ENCODE measurements at regions of chr6 and their contacts with region 1.

Region 1: DNA sequence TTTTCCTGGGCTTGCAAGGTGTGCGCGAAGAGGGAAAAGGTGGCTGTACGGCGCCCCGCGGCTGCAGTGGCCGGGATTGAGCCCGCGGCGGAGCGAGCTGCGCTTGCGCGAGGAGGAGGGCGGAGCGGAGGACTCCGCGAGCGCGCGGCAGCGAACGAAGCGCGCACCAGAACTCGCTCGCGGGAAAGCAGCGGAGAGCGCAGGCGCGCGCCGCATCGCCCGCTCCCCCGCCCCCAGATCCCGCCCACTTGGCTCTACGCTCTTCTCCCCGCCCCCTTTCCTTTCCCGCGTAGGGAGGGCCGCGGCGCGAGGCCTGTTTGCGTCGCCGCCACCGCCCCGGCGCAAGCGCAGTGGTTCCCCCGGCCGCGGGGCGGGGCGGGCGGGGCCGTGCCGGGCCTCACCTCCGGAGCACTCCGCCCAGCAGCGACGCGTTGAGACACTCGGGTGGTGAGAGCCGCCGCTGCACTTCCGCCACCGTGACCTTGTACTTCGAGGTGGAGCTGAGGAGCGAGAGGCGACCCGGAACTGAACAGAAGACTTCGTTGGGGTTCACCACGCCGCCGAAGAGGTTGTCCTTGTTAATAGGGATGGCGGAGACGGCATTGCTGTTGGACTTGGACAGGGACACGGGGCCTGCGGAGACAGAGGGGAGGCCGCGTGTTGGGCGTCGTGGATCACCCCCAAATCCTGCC is 10.6 kb downstream of the TFAP2A start:
- DNase-seq: peak; percentile 88 to 98
- H3K4me3 ChIP-seq: peak overlapping the region; percentile 83
- H3K27ac ChIP-seq: peak overlapping the region; percentile 98
- H3K4me1 ChIP-seq: peaks cover 74% of the 10 kb centered on the region
- H3K27me3 ChIP-seq: no peaks in the 10 kb centered on the region
- CTCF ChIP-seq: peak; percentile 38; the same call in 1 of the 2 replicates

Region 2: DNA sequence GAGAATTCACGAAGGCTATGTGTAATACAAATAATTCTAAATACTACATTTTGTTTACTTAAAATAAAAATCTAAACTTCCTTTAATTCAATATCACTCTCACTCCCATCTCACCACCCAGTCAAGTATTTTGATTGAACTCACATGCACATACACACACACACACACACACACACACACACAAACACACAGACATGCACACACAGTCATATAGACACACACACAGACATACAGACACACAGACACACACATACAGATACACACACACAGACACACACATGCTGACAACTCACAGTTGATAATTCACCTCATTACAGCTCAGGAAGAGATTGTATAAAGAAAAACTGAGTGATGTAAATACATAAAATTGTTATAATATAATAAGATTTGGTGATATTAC is 1409.1 kb before region 1 on chr6:
- CTCF ChIA-PET with region 1: no interaction called
- POLR2A ChIA-PET with region 1: interaction called, 14 read pairs
- intact Hi-C with region 1: no loop called
- DNase-seq: no peak
- H3K4me3 ChIP-seq: no peak overlapping the region
- H3K27ac ChIP-seq: no peak overlapping the region
- H3K4me1 ChIP-seq: no peaks in the 10 kb centered on the region
- H3K27me3 ChIP-seq: no peaks in the 10 kb centered on the region
- CTCF ChIP-seq: no peak

Region 3: DNA sequence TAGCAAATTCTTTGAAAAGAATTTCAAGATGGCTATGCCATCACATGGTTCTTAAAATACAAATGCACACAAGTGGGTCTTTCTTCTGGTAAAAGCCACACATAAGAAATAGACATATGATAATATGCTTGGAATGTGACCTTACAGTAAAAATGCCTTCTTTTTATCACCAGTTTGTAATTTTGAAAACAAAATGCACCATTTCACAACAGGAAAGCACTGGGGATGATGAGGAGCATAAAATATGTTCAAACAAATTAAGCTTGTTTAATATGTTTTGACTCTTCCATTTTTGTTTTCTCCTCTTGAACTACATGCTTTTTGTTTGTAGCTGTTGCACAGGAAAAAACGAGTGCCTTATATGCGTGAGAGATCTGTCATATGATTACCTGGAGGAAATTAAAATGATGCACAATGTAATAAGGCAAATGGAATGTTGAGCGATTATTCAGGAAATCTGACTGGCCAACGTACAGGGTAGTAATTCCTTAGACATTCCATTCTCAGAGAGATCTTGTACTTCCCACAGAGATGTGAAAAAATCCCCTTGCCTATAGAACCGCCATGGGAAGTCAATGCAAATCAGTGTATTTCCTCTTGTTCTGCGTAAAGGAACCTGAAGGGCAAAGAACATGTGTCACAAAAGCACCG is 901.0 kb before region 1 on chr6:
- CTCF ChIA-PET with region 1: no interaction called
- POLR2A ChIA-PET with region 1: interaction called, 18 read pairs
- intact Hi-C with region 1: no loop called
- DNase-seq: peak; percentile 42 to 78
- H3K4me3 ChIP-seq: no peak overlapping the region
- H3K27ac ChIP-seq: 0 out of 2 replicates have a peak overlapping the region, but pooled peaks have one; percentile 37
- H3K4me1 ChIP-seq: no peaks in the 10 kb centered on the region; the same call in 1 of the 2 replicates
- H3K27me3 ChIP-seq: no peaks in the 10 kb centered on the region
- CTCF ChIP-seq: no peak

Region 4: DNA sequence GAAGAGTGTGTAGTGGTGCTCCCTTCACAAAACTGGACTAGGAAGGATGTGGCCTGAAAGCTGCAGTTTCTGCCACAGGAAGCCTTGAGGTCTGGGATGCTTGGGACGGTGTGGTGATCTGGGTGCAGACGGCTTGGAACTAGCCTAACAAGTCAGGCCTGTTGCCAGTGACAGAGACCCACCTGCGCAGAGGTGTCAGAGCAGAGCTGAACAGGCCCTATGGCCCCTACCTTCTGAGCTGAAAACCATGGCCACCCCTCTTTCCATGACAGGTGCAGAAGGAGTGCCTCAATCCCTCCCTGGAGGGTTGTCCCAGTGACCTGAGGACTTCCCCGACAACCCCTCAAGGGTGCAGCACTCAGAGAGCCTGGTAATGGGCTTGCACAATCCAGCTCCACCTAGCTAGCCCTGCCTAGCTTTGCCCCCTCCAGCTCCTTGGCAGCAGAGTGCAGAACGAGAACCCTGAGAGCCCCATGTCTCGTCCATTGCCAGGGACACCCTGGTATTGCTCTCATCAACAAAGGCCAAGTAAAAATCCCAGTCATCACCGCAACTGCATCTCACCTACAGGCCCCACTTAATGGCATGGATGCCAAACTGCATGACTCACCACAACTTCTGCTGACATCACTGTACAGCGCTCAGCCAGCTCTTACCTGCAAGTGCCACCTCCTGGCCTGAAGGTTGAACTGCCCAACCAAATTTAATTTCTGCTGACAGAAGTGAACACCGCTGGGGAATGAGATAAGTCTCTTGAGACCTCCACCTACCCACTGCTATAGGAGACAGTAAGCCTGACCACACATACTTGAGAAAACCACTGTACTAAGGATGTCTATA is 552.5 kb before region 1 on chr6:
- CTCF ChIA-PET with region 1: no interaction called
- POLR2A ChIA-PET with region 1: no interaction called
- intact Hi-C with region 1: loop called (anchors 5 kb)
- DNase-seq: peak; percentile 55 to 57
- H3K4me3 ChIP-seq: no peak overlapping the region
- H3K27ac ChIP-seq: no peak overlapping the region
- H3K4me1 ChIP-seq: no peaks in the 10 kb centered on the region
- H3K27me3 ChIP-seq: no peaks in the 10 kb centered on the region
- CTCF ChIP-seq: peak; percentile 36; the same call in 1 of the 2 replicates

Region 5: DNA sequence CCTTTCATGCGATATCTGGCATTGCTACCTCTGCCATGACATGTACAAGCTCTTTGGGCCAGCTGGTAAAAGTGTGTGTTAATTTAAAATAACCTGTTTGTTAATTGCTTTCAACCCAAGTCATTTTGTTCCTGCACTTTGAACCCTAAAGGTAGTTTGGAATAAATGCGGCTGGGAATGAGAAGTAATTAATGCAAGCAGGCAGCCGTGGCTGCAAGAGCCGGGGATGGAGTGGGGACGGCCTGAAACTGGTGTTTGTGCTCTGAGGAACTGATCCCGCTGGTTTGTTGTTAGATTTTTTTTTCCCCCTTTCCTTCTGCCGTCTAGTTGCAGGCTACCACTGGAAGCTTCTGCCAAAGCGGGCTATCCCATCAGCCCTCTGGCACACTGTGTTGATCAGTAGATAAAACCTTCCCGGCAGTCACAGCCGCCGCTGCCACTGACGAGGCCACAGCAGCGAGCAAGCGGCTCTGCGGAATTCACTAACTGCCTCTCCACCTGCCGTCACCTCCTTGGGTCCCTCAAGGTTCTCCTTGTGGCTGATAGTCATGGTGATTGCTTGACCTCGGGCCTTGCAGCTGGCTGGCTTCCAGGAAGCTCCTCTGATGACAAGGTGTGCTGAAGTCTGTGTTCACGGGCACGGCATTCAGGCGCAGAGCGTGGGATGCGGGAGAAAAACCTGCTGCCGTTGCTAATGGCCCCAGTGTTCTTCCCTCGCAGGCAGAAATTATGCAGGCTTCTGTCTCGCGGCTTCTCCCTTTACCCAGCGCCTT is 305.3 kb before region 1 on chr6:
- CTCF ChIA-PET with region 1: no interaction called
- POLR2A ChIA-PET with region 1: no interaction called
- intact Hi-C with region 1: loop called (anchors 5 kb)
- DNase-seq: peak in 1 of 2 experiments; percentile 47
- H3K4me3 ChIP-seq: peak overlapping the region; percentile 24; the same call in 1 of the 2 replicates
- H3K27ac ChIP-seq: no peak overlapping the region
- H3K4me1 ChIP-seq: no peaks in the 10 kb centered on the region; the same call in 1 of the 2 replicates
- H3K27me3 ChIP-seq: no peaks in the 10 kb centered on the region
- CTCF ChIP-seq: no peak

Region 6: DNA sequence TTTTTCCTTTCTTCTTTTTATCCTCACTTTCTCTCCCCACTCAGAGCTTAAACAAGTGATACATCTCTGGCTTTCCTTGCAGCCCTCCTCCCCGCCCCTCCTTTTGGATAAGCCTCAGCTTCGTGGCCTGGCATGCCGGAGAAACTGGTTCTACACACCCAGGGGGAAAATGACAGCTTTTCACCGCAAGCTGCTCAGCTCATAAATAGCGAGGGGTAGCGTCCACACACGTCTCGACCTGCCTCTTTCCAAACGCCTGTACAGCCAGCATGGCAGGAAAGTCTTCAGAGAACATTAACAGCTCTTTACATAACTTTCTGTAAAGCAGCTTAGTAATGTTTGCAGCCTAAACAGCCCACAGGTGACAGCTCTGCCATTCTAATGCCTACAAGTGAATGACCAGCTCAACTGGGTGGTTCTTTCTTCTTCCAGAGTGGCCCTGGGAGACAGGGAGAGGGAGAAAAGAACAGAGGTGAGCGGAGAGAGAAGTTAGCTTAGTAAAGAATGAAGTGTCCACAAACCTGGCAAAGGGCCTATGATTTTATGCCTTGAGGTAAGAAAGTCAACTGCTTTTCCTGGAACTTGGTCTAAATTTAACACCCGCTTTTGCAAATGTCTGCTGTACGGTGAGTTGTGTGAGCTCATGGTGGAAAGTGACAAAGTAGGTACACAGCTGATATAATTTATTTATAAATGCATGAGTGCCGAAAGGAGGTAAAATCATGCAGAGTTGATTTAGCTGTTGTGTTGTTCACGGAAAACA is 240.9 kb before region 1 on chr6:
- CTCF ChIA-PET with region 1: interaction called, 4 read pairs
- POLR2A ChIA-PET with region 1: no interaction called
- intact Hi-C with region 1: loop called (anchors 5 kb)
- DNase-seq: peak; percentile 80 to 84
- H3K4me3 ChIP-seq: peak overlapping the region; percentile 54
- H3K27ac ChIP-seq: peak overlapping the region; percentile 72
- H3K4me1 ChIP-seq: peaks cover 26% of the 10 kb centered on the region
- H3K27me3 ChIP-seq: no peaks in the 10 kb centered on the region
- CTCF ChIP-seq: no peak

Region 7: GRCh38 chr6:10347561-10348327 is 56.5 kb before region 1 on chr6:
- CTCF ChIA-PET with region 1: no interaction called
- POLR2A ChIA-PET with region 1: no interaction called
- intact Hi-C with region 1: loop called (anchors 5 kb)
- DNase-seq: peak; percentile 66 to 79
- H3K4me3 ChIP-seq: no peak overlapping the region
- H3K27ac ChIP-seq: peak overlapping the region; percentile 68
- H3K4me1 ChIP-seq: peaks cover 9% of the 10 kb centered on the region
- H3K27me3 ChIP-seq: no peaks in the 10 kb centered on the region
- CTCF ChIP-seq: no peak

Region 8: GRCh38 chr6:10381133-10381829 is 23.0 kb before region 1 on chr6:
- CTCF ChIA-PET with region 1: no interaction called
- POLR2A ChIA-PET with region 1: no interaction called
- intact Hi-C with region 1: no loop called
- DNase-seq: no peak
- H3K4me3 ChIP-seq: no peak overlapping the region
- H3K27ac ChIP-seq: no peak overlapping the region
- H3K4me1 ChIP-seq: 0 out of 2 replicates have a peak, but pooled peaks cover 5% of the 10 kb centered on the region
- H3K27me3 ChIP-seq: no peaks in the 10 kb centered on the region
- CTCF ChIP-seq: no peak

Measured in PC-9 (cell line).